H1 (cell line): ENCODE measurements at regions of chr9 and their contacts with region 1.

Region 1: GRCh38 chr9:93248386-93249040 is 64.6 kb downstream of the WNK2 start:
- DNase-seq: no peak
- H3K4me3 ChIP-seq: no peak overlapping the region
- H3K27ac ChIP-seq: no peak overlapping the region
- H3K4me1 ChIP-seq: peaks cover 0 to 7% (median 0%) of the 10 kb centered on the region in 4 experiments; a peak in 3 of 7 replicates
- H3K27me3 ChIP-seq: no peaks in the 10 kb centered on the region
- CTCF ChIP-seq: no peak
- EP300 ChIP-seq: no peak
- POLR2A ChIP-seq: no peak
- RAD21 ChIP-seq: no peak

Region 2: GRCh38 chr9:93013856-93014582 is 234.5 kb before region 1 on chr9:
- CTCF ChIA-PET with region 1: no interaction called
- POLR2A ChIA-PET with region 1: no interaction called
- DNase-seq: peak in 1 of 2 experiments; percentile 53
- H3K4me3 ChIP-seq: no peak overlapping the region
- H3K27ac ChIP-seq: no peak overlapping the region
- H3K4me1 ChIP-seq: peaks cover 2 to 5% (median 4%) of the 10 kb centered on the region in 4 experiments; a peak in 6 of 7 replicates
- H3K27me3 ChIP-seq: no peaks in the 10 kb centered on the region
- CTCF ChIP-seq: no peak
- EP300 ChIP-seq: no peak
- POLR2A ChIP-seq: no peak
- RAD21 ChIP-seq: no peak

Region 3: DNA sequence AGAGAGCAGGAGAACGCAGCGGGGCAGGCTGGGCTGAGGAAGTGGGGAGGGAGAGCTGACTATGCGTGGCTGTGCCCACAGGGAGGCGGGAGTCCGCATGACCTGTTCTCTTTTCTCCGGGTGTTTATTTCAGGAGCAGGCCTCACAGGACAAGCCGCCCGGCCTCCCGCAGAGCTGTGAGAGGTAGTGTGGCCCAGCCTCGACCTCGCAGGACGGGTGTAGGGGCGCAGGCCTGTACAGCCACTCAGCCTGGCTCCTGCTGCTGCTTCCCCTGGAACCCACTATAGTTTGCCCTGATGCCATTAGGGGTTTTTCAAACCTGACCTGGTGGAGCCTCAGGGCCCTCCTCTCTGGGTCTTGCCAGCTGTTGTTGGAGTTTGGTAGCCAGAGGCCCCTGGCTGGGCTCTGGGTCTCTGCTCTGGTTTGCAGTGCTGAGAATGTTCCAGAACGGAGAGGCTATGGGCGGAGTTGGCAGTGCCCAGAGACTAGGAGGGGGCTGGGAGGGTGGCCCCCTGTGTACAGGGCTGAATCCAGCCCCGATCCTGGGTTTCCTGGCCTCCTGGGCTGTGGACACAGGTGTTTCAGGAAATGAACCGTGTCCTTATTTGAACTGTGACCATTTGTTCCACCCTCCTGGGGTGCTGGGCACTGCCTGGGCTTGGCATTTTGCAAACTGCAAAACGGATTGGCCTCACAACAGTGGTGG is 14.2 kb after region 1 on chr9:
- CTCF ChIA-PET with region 1: interaction called, 11 read pairs
- POLR2A ChIA-PET with region 1: interaction called, 4 read pairs
- DNase-seq: no peak
- H3K4me3 ChIP-seq: no peak overlapping the region
- H3K27ac ChIP-seq: no peak overlapping the region
- H3K4me1 ChIP-seq: no peaks in the 10 kb centered on the region
- H3K27me3 ChIP-seq: no peaks in the 10 kb centered on the region
- CTCF ChIP-seq: no peak
- EP300 ChIP-seq: no peak
- POLR2A ChIP-seq: no peak
- RAD21 ChIP-seq: no peak